Ascending aorta (tissue), 2 donors: ENCODE measurements at regions of chr18 and their contacts with region 1.

Region 1: GRCh38 chr18:63523660-63524059 is 18.5 kb upstream of the SERPINB12 start:
- DNase-seq: no peak
- H3K4me3 ChIP-seq: no peak overlapping the region
- H3K27ac ChIP-seq: no peak overlapping the region
- H3K4me1 ChIP-seq: no peaks in the 10 kb centered on the region
- H3K27me3 ChIP-seq: no peaks in the 10 kb centered on the region
- CTCF ChIP-seq: no peak

Region 2: DNA sequence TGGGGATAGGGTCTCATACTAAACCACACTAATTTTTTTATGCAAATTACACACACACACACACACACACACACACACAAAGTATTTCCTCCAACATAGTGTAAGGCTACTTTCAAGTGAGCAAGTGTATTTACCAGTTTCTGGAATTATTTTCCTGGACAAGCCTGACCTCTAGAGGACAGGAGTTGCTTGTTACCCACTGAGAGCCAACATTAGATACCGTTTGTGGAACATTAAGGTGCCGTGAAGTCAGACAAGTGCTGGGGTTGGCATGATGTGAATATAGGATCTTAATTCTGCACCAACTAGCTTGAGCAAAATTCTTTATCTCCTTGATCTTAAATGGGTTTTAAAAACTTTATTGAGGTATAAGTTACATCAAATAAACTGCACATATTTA is 324.5 kb after region 1 on chr18:
- intact Hi-C with region 1: loop called (anchors 2 kb)
- DNase-seq: no peak
- H3K4me3 ChIP-seq: no peak overlapping the region
- H3K27ac ChIP-seq: no peak overlapping the region
- H3K4me1 ChIP-seq: no peaks in the 10 kb centered on the region
- H3K27me3 ChIP-seq: no peaks in the 10 kb centered on the region
- CTCF ChIP-seq: peak; percentile 10 to 48 (median 12)